Activated CD4-positive, alpha-beta T cell treated with anti-CD3 and anti-CD28 coated beads for 36 hours (primary cell): ENCODE measurements at regions of chr17 and their contacts with region 1.

Region 1: GRCh38 chr17:49327835-49328784 is 33.9 kb downstream of the ZNF652 start:
- DNase-seq: peak; percentile 19
- ATAC-seq: peak; percentile 92
- H3K4me3 Mint-ChIP-seq: no peak overlapping the region
- H3K27ac Mint-ChIP-seq: peak overlapping the region; percentile 67
- H3K4me1 Mint-ChIP-seq: peaks cover 44% of the 10 kb centered on the region
- H3K27me3 Mint-ChIP-seq: no peaks in the 10 kb centered on the region

Region 2: GRCh38 chr17:49361902-49362722 is 34.0 kb after region 1 on chr17 and contains the start of gene ZNF652:
- CTCF ChIA-PET with region 1: interaction called, 3 read pairs
- POLR2A ChIA-PET with region 1: no interaction called
- intact Hi-C with region 1: loop called in 1 of 2 experiments (anchors 1 kb)
- DNase-seq: peak; percentile 93
- ATAC-seq: peak; percentile 57
- H3K4me3 Mint-ChIP-seq: peak within 1 kb of the TSS; percentile 92
- H3K27ac Mint-ChIP-seq: peak within 1 kb of the TSS; percentile 92
- H3K4me1 Mint-ChIP-seq: peaks cover 50% of the 10 kb centered on the region
- H3K27me3 Mint-ChIP-seq: peaks cover 1% of the 10 kb centered on the region
- total RNA-seq, gene ZNF652: 5.2 to 7.0 TPM

Region 3: GRCh38 chr17:49370971-49371834 is 43.1 kb after region 1 on chr17:
- CTCF ChIA-PET with region 1: interaction called, 11 read pairs
- POLR2A ChIA-PET with region 1: no interaction called
- intact Hi-C with region 1: no loop called
- DNase-seq: no peak
- ATAC-seq: no peak
- H3K4me3 Mint-ChIP-seq: no peak overlapping the region
- H3K27ac Mint-ChIP-seq: no peak overlapping the region
- H3K4me1 Mint-ChIP-seq: no peaks in the 10 kb centered on the region
- H3K27me3 Mint-ChIP-seq: no peaks in the 10 kb centered on the region